BJ (cell line): ENCODE measurements at regions of chr10 and their contacts with region 1.

Region 1: DNA sequence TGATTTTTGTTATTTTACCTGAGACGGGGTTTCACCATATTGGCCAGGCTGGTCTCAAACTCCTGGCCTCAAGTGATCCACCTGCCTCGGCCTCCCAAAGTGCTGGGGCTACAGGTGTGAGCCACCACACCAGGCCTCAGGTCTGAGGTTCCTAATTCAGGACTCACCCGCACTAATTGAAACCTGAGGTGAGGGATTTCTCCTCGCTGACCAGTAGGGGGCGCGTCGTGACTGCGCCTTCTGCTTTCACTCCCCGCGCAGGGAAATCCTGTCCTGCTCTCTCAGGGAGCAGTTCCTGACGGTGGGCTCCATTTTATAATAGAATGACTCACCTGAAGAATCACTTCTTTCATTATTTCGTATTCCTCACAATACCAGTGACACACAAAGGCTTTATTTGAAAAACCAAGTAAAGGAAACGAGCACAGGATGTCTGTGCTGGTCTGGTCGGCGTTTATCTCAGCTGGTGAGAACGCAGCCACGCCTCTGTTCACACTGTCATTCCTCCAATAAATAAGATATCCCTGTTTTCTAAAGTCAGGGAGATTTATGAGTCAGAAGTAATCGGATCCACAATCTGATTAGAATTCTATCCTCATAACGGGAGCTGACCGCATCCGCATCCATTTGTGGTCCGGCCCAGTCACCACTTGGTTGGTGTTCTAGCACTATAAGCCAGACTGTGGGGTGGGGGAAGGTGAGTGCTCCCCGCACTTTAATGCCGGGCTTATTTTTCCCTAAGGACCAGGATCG is 35.4 kb downstream of the BAG3 start:
- DNase-seq: peak; percentile 65
- H3K4me3 ChIP-seq: peak overlapping the region; percentile 32
- H3K27me3 ChIP-seq: no peaks in the 10 kb centered on the region; the same call in 1 of the 2 replicates
- CTCF ChIP-seq: peak; percentile 90

Region 2: GRCh38 chr10:119705434-119705831 is 18.8 kb after region 1 on chr10:
- CTCF ChIA-PET with region 1: interaction called, 15 read pairs
- POLR2A ChIA-PET with region 1: no interaction called
- DNase-seq: no peak
- H3K4me3 ChIP-seq: no peak overlapping the region
- H3K27me3 ChIP-seq: no peaks in the 10 kb centered on the region; the same call in 1 of the 2 replicates
- CTCF ChIP-seq: no peak

Region 3: DNA sequence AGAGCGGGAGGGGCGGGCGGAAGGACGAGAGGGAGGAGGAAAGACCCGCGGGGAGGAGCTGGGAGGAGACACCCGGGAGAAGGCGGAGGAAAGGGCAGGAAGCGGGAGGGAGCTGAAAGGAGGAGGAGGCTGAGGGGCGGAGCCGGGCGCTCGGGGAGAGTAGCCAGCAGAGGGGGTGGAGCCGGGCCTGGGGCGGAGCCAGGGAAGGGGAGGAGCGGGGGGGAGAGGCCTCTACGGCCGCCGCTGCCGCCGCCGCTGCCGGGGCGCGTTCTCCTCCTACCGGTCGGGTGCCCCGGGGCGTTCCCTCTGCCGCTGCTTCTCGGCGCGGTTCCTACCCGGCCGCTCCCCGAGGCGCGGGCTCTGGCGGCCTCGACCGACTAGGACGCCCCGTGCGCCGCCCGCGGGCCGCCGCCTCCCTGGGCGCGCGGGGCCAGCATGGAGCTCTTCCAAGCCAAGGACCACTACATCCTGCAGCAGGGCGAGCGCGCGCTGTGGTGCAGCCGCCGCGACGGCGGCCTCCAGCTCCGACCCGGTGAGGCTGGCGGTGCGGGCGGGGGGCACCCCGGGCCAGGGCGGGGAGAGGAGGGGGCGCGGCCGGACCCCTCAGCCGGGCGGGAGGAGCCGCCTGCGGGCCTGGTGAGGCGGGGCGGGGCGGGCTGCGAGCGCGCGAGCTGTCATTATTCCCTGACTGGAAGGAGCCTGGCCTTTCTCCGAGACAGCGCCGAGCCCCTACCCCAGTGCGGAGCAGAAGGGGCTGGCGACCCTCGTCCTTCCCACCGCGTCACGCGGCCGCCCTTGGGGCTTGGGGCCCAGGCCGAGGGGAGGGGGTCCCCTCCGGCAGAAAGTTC is 39.4 kb after region 1 on chr10 and contains the start of gene INPP5F:
- CTCF ChIA-PET with region 1: interaction called, 10 read pairs
- POLR2A ChIA-PET with region 1: no interaction called
- DNase-seq: peak; percentile 82
- H3K4me3 ChIP-seq: peak within 1 kb of the TSS; percentile 69
- H3K27me3 ChIP-seq: no peaks in the 10 kb centered on the region
- CTCF ChIP-seq: 0 out of 2 replicates have a peak, but pooled peaks have one; percentile 11
- polyA plus RNA-seq, gene INPP5F: 4.1 and 7.3 TPM in 2 replicates

Region 4: DNA sequence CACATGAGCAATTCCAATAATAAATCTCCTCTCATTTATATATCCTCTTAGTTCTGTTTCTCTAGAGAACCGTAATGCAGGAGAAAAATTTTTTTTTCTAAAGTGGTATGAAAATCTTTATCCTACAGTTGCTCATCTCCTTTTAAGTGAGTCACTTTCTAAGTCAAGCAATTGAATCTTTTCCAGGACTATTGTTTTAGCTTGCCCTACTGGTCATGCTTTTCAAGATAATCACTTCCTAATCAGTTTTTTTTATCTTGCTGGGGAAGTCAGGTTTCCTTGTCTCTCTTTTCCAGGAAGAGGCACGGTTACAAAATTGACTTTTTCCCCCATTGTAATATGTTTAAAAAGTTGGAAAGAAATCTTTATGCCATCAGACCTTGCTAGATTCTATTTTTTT is 83.3 kb after region 1 on chr10:
- CTCF ChIA-PET with region 1: no interaction called
- POLR2A ChIA-PET with region 1: no interaction called
- DNase-seq: peak; percentile 41
- H3K4me3 ChIP-seq: no peak overlapping the region
- H3K27me3 ChIP-seq: no peaks in the 10 kb centered on the region
- CTCF ChIP-seq: no peak

Region 5: GRCh38 chr10:119947300-119947699 is 260.7 kb after region 1 on chr10:
- CTCF ChIA-PET with region 1: no interaction called
- POLR2A ChIA-PET with region 1: no interaction called
- DNase-seq: no peak
- H3K4me3 ChIP-seq: no peak overlapping the region
- H3K27me3 ChIP-seq: no peaks in the 10 kb centered on the region
- CTCF ChIP-seq: no peak